ENCODE measurements at regions of chr3 and their contacts with region 1.

Region 1: DNA sequence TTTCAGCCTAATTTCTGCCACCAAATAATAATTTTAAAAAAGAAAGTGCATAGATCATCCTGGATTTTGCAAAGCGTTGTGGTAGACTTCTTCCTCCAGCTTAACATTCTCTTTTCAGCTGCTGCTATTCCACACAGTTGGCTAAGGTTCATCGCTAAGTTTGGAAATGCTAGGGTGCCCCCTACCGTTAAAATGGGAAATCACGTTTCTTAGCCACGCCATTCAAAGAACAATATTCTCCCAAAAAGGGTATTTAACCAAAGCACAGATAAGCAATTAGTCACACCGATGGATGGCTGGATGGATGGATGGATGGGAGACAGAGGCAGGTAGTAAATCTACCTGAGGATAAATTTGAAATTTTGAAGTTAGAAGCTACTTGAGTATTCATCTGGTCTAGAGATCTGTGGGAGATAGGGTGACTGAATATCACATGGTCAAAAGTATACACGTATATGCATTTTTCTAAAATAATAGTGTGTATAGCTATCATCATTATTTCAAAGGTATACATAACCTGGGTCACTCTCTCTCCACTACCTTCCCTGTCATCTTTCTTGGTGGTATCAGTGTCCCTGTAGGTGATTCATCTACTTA is 67.2 kb downstream of the EFHB start:
- DNase-seq: peak; percentile 64 to 82 (median 76)
- H3K4me3 ChIP-seq: no peak overlapping the region
- H3K27ac ChIP-seq: no peak overlapping the region
- H3K4me1 ChIP-seq: peaks cover 0 to 2% (median 0%) of the 10 kb centered on the region in 4 experiments
- H3K27me3 ChIP-seq: no peaks in the 10 kb centered on the region

Region 2: DNA sequence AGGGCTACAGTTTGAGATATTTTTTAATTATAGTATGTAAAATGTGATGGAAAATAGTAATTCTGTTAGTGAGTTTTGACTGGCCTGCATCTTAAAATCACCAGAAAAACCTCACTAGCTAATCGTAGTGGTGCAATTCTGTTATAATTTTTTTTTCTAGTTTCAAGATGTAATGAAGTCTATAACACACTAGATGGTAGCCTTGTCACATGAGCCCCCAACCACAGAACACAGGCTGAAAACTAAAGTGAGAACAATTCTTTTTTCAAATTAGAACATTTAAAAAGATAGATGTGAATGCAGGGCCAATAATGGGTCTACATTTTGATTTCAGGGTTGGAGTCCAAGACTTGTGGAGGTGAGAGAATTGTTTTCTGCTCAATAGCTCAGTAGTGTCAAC is 801.8 kb before region 1 on chr3:
- CTCF ChIA-PET with region 1: interaction called, 34 read pairs
- POLR2A ChIA-PET with region 1: no interaction called
- DNase-seq: peak; percentile 31 to 76 (median 65)
- H3K4me3 ChIP-seq: no peak overlapping the region
- H3K27ac ChIP-seq: no peak overlapping the region
- H3K4me1 ChIP-seq: no peaks in the 10 kb centered on the region
- H3K27me3 ChIP-seq: no peaks in the 10 kb centered on the region

Region 3: DNA sequence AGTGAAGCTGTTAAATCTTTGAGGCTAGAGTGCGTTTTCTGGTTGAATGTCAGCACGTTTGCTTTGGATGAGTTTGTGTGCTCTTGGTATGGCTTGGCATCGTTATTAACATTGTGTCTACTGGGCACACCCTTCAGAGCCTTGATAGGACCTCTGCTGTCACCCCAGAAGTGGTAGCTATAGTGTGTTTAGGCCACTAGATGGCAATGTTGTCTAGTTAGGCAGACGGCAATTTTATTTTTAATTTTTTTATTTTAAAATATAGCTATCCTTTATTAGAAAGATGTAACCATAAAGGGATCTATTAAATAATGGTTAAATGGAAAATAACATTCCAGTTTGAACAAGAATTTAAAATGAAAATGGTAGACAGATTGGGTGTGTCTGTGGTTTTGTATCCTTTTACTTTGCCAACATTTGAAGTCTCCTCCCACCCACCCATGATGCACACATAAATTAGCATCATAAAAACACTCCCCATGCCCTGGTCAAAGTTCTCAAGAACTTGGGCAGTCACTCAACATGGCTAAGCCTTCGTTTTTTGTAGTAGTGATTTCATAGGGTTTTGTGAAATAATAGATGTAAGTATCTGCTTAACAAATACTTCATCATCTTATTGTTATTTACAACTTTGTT is 517.8 kb before region 1 on chr3:
- CTCF ChIA-PET with region 1: interaction called, 20 read pairs
- POLR2A ChIA-PET with region 1: no interaction called
- DNase-seq: peak; percentile 22 to 56 (median 48)
- H3K4me3 ChIP-seq: peak overlapping the region in 2 of 7 experiments; percentile 8 to 37
- H3K27ac ChIP-seq: no peak overlapping the region
- H3K4me1 ChIP-seq: peaks cover 6 to 24% (median 11%) of the 10 kb centered on the region in 4 experiments
- H3K27me3 ChIP-seq: no peaks in the 10 kb centered on the region

Region 4: DNA sequence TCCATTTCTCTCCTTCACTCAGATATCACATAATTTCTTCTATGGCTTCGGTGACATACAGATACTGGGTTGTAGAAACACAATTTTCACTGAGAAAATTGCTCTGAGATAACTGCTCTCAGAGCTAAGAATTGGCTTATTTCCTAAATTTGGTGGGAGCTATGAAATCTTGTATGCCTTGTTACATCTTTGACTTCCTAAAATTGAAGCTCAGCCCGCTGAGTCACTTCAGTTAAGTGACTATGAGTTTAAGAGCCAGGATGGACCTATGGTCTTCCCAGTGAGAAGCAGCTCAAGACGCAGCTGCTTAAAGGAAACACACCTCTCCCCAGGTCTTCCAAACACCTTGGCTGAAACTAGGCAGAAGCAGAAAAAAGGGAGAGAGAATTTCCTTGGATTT is 10.8 kb after region 1 on chr3:
- CTCF ChIA-PET with region 1: interaction called, 11 read pairs
- POLR2A ChIA-PET with region 1: no interaction called
- DNase-seq: peak in 2 of 3 donors; percentile 35 to 41
- H3K4me3 ChIP-seq: no peak overlapping the region
- H3K27ac ChIP-seq: no peak overlapping the region
- H3K4me1 ChIP-seq: no peaks in the 10 kb centered on the region
- H3K27me3 ChIP-seq: no peaks in the 10 kb centered on the region

Region 5: DNA sequence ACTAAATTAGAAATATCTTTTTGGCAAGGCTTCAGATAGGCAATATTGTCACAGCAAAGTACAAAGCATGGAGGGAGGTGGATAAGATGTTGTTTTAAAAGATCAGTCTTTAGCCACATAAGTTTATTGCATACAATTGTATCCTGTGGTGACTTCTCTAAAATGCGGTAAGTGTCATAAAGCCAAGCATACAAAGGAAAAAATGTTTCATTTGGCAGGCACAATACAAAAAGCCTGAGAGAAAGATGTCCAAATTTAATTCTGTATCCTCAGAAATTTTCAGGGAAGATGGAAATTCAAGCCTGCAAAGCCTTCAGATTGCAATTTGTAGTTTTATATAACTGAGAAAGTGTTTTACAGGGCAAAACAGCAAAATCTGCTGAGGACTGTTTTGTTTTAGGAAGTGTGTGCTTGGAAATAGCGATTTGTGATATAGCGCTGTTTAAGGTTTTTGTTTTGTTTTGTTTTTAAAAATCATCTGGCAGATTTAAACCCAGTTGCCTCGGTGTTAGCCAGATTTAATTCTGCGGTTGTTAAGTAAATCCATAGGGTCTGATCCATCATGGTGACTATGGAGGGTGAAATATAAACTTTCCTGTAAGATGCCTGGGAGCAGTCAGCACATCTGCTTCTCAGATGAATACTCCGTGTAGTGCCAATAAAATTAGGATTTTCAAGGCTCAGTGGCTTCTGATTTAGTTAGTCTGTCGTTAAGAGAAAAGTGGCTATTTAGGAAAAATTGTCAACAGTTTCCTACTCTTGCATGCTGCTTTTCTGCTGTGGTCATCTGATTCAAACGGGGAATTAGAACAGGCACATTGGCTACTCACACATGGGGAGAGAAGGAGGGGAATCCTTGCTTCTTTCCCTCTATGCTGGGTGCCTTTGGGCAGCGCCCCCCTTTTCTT is 181.4 kb after region 1 on chr3:
- CTCF ChIA-PET with region 1: no interaction called
- POLR2A ChIA-PET with region 1: no interaction called
- DNase-seq: peak in 2 of 3 donors; percentile 47 to 54
- H3K4me3 ChIP-seq: no peak overlapping the region
- H3K27ac ChIP-seq: peak overlapping the region in 1 of 2 experiments; percentile 22
- H3K4me1 ChIP-seq: peaks cover 4 to 33% (median 13%) of the 10 kb centered on the region in 4 experiments
- H3K27me3 ChIP-seq: no peaks in the 10 kb centered on the region